HCT116 (cell line): ENCODE measurements at regions of chr6 and their contacts with region 1.

Region 1: GRCh38 chr6:103139377-103139776 is 1720.3 kb downstream of the HACE1 start:
- DNase-seq: no peak
- ATAC-seq: no peak
- H3K4me3 ChIP-seq: no peak overlapping the region
- H3K27ac ChIP-seq: no peak overlapping the region
- H3K4me1 ChIP-seq: no peaks in the 10 kb centered on the region
- H3K27me3 ChIP-seq: no peaks in the 10 kb centered on the region
- CTCF ChIP-seq: no peak
- POLR2A ChIP-seq: no peak
- RAD21 ChIP-seq: no peak

Region 2: DNA sequence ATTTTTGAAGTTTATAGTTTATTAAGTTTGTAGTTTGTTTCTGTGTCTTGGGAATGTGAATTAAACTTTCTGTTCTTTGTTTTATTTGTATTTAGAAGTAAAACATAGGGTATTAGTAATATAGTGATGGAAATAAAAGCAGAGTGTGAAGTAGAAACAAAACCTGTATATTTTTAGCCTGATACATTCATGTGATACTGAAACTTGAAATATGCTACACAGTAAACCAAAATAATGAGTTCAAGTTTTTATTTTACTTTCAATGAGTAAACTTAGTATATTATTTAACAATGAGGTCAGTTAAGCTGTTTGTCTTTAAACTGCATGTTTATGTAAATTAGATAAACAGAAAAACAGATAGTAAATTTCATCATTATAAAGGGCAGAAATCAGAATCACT is 153.3 kb before region 1 on chr6:
- CTCF ChIA-PET with region 1: no interaction called
- POLR2A ChIA-PET with region 1: no interaction called
- RAD21 ChIA-PET with region 1: no interaction called
- intact Hi-C with region 1: no loop called
- DNase-seq: no peak
- ATAC-seq: no peak
- H3K4me3 ChIP-seq: no peak overlapping the region
- H3K27ac ChIP-seq: no peak overlapping the region
- H3K4me1 ChIP-seq: no peaks in the 10 kb centered on the region
- H3K27me3 ChIP-seq: no peaks in the 10 kb centered on the region
- CTCF ChIP-seq: no peak
- POLR2A ChIP-seq: no peak
- RAD21 ChIP-seq: no peak

Region 3: GRCh38 chr6:103107985-103108384 is 31.4 kb before region 1 on chr6:
- CTCF ChIA-PET with region 1: no interaction called
- POLR2A ChIA-PET with region 1: no interaction called
- RAD21 ChIA-PET with region 1: no interaction called
- intact Hi-C with region 1: loop called (anchors 2 kb)
- DNase-seq: no peak
- ATAC-seq: no peak
- H3K4me3 ChIP-seq: no peak overlapping the region
- H3K27ac ChIP-seq: no peak overlapping the region
- H3K4me1 ChIP-seq: no peaks in the 10 kb centered on the region
- H3K27me3 ChIP-seq: no peaks in the 10 kb centered on the region
- CTCF ChIP-seq: no peak
- POLR2A ChIP-seq: no peak
- RAD21 ChIP-seq: no peak

Region 4: GRCh38 chr6:103122766-103123601 is 16.4 kb before region 1 on chr6:
- CTCF ChIA-PET with region 1: no interaction called
- POLR2A ChIA-PET with region 1: no interaction called
- RAD21 ChIA-PET with region 1: no interaction called
- intact Hi-C with region 1: no loop called
- DNase-seq: peak; percentile 69
- ATAC-seq: peak; percentile 98
- H3K4me3 ChIP-seq: no peak overlapping the region
- H3K27ac ChIP-seq: no peak overlapping the region
- H3K4me1 ChIP-seq: peaks cover 0 to 3% of the 10 kb centered on the region in 2 experiments; a peak in 1 of 4 replicates
- H3K27me3 ChIP-seq: no peaks in the 10 kb centered on the region
- CTCF ChIP-seq: peak; percentile 50 to 76 (median 65); a peak in 5 of 6 replicates
- POLR2A ChIP-seq: no peak
- RAD21 ChIP-seq: peak; percentile 86